ENCODE measurements at regions of chr7 and their contacts with region 1.

Region 1: GRCh38 chr7:16071246-16071857 is 350.0 kb downstream of the CRPPA start:
- H3K4me3 Mint-ChIP-seq: no peak overlapping the region
- H3K27ac Mint-ChIP-seq: no peak overlapping the region
- H3K4me1 Mint-ChIP-seq: no peaks in the 10 kb centered on the region
- H3K27me3 Mint-ChIP-seq: no peaks in the 10 kb centered on the region

Region 2: DNA sequence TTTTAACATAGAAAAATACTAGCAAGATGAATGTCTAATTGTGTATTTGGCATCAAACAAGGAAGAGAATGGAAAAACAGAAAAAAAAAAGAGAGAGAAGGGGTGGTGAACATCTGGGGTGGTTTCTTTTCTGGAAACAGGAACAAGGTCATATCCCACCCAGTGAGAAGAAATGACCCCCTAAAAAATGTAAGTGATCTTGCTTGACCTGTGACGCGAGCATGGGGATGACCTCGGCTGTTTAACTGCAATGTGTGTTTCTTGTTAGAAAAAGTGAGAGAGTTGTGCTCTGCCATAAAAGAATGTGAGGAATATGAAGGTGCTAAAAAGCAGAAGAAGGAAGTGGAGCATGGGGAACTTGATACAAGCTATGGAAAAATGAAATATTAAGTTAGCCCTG is 768.0 kb before region 1 on chr7:
- intact Hi-C with region 1: loop called (anchors 5 kb)
- H3K4me3 Mint-ChIP-seq: no peak overlapping the region
- H3K27ac Mint-ChIP-seq: no peak overlapping the region
- H3K4me1 Mint-ChIP-seq: no peaks in the 10 kb centered on the region
- H3K27me3 Mint-ChIP-seq: no peaks in the 10 kb centered on the region

Region 3: DNA sequence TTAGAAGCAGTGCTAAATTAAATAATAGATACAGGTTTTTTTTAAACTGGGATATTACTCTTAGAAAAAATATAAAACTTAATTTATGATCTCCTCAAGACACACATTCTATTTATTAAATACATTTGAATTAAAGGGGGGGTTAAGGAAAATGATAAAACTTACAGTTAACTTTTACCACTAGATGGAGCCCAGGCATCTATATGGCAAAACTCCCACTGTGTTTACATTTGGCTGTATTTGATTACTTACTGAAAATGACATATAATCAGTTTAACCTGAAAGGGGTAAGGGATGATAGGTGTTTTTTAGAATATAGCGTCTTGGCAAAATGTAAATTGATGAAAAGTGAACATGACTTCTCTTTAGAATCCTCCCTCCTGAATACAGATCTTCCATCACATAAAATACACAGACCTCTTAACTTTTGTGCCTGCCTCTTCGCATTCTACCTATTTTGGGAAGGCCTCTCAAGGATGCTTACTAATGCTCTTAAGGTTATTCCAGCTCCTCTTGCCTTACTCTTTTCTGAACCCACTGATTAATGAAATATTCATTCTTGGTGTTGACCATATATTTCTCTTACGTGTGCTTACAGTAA is 745.2 kb before region 1 on chr7:
- intact Hi-C with region 1: loop called (anchors 2 kb)
- H3K4me3 Mint-ChIP-seq: no peak overlapping the region
- H3K27ac Mint-ChIP-seq: no peak overlapping the region
- H3K4me1 Mint-ChIP-seq: no peaks in the 10 kb centered on the region
- H3K27me3 Mint-ChIP-seq: no peaks in the 10 kb centered on the region

Region 4: DNA sequence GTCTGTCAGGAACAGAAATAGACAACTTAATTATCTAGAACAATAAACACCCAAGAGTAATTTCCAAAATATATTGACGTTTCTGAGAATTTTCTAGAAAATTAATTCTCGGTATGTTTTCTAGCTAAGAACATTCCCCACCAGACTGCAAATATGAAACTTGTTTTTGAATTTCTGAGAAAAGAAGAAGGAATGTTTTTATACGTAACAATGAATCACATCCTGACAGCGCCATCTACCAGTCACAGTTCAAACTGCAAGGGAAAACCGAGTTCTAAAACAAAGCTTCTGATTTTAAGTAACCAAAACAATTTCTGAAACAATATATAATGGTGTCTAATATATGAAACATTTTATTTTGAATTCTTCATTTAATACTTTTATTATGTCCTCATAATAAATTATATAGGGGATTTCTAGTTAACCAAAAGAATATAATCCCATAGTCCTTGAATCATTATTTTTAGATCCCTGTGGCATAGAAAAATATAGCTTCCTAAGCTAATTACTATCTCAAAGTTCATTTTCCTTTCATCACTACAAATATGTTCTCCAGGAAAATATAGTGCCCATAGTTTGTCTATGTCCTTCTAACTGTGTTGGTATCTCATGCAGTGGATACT is 350.4 kb before region 1 on chr7:
- intact Hi-C with region 1: loop called (anchors 5 kb)
- H3K4me3 Mint-ChIP-seq: no peak overlapping the region
- H3K27ac Mint-ChIP-seq: no peak overlapping the region
- H3K4me1 Mint-ChIP-seq: peaks cover 6% of the 10 kb centered on the region
- H3K27me3 Mint-ChIP-seq: no peaks in the 10 kb centered on the region

Region 5: DNA sequence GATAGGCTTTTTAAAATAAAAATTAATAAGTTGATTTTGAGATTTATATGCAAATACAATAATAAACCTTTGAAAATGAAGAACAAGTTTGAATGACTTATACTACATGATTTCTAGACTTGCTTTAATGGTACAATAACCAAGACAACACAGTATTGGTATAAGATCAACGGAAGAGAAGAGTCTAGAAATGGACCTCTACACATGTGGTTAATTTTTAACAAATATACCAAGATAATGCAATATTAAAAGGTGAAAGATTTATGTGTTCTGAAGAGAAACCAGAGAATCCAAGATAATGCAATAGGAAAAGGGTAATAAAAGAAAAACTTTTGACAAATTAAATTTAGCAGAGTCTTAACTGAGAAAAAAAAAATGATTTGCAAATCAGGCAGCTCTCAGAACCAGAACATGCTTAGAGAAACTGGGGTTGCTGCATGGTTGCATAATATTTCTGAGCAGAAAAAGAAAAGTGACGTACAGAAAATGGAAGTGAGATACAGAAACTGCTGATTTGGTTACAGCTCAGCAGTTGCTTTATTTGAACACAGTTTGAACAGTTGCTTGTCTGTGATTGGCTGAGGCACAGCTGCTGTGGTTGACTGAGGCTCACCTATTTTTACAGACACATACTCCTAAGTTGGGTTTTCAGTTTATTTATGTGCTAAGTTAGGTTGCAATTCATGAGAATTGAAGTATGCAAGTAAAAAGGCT is 15.9 kb before region 1 on chr7:
- intact Hi-C with region 1: no loop called
- H3K4me3 Mint-ChIP-seq: no peak overlapping the region
- H3K27ac Mint-ChIP-seq: peak overlapping the region; percentile 37
- H3K4me1 Mint-ChIP-seq: peaks cover 10% of the 10 kb centered on the region
- H3K27me3 Mint-ChIP-seq: no peaks in the 10 kb centered on the region